Dendritic cell treated with granulocyte-macrophage colony-stimulating factor and Interleukin-4, amounts not matched to agents 40 ng/mL and 50 ng/mL, for 4 days (primary cell): ENCODE measurements at regions of chr1 and their contacts with region 1.

Region 1: DNA sequence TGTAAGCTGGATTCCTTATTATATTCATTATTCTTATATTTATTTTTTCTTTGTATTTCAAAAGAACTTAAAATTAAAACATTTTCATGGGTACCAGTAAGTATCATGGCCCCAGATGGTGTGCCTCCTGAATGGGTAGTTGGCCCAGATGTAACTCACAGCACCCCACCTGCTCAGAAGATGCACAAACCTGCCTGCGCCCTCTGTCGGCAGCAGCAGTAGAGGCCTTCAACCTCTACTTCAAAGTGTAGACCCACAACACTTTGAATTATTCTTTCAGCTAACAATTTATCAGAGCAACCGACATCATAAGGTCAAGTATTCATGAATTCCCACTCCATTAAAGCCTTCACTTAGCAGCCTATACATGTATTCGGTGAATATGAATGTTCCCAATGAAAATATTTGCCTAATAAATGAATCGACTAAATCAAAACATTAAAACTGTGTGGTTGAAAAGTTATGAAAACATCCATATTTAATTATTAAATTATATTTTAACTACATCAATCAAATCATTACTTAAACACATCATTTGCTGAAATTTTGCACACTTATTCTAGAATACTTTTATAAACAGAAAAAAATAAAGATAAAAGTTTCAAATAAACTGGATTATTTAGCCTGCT is 25.4 kb downstream of the PIGM start:
- H3K4me3 Mint-ChIP-seq: no peak overlapping the region
- H3K27ac Mint-ChIP-seq: no peak overlapping the region
- H3K4me1 Mint-ChIP-seq: peaks cover 7% of the 10 kb centered on the region
- H3K27me3 Mint-ChIP-seq: no peaks in the 10 kb centered on the region

Region 2: DNA sequence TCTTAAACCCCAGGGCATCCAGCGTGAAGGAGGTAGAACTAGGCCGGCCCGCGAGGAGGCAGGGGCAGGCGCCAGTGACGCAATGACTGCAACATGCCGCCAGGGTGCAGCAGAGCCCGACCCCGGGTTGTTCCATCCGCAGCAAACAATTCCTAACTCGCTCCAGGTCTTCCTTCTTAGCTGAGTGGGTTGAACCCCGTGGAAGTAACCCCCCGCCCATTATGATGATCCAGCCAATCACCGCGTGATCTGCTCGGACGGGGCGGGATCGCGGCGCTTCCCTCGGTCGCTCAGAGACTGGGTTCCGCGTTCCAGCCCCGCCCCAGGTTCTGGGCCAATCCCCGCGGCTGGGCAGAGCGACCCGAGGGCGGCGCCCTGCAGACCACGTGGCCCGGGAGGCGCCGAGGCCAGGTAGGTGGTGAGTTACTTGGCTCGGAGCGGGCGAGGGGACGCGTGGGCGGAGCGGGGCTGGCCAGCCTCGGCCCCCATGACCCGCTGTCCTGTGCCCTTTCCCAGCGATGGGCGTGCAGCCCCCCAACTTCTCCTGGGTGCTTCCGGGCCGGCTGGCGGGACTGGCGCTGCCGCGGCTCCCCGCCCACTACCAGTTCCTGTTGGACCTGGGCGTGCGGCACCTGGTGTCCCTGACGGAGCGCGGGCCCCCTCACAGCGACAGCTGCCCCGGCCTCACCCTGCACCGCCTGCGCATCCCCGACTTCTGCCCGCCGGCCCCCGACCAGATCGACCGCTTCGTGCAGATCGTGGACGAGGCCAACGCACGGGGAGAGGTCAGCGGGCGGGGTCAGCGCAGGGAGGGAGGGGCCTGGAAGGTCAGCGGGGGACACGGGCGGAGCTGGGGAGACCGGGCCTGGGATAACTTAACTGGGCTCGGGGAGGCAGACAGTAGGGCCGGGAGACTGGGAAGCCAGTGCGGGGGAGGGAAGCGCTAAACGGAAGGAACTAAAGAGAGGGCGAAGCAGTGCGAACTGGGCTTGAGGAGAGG is 225.5 kb before region 1 on chr1 and contains the start of gene DUSP23:
- intact Hi-C with region 1: loop called (anchors 5 kb)
- H3K4me3 Mint-ChIP-seq: peak within 1 kb of the TSS; percentile 80
- H3K27ac Mint-ChIP-seq: peak within 1 kb of the TSS; percentile 82
- H3K4me1 Mint-ChIP-seq: peaks cover 52% of the 10 kb centered on the region
- H3K27me3 Mint-ChIP-seq: no peaks in the 10 kb centered on the region

Region 3: GRCh38 chr1:159798893-159799292 is 207.5 kb before region 1 on chr1:
- intact Hi-C with region 1: loop called (anchors 2 kb)
- H3K4me3 Mint-ChIP-seq: no peak overlapping the region
- H3K27ac Mint-ChIP-seq: no peak overlapping the region
- H3K4me1 Mint-ChIP-seq: peaks cover 52% of the 10 kb centered on the region
- H3K27me3 Mint-ChIP-seq: peaks cover 13% of the 10 kb centered on the region

Region 4: GRCh38 chr1:159936273-159936904 is 70.0 kb before region 1 on chr1:
- intact Hi-C with region 1: loop called (anchors 1 kb)
- H3K4me3 Mint-ChIP-seq: no peak overlapping the region
- H3K27ac Mint-ChIP-seq: no peak overlapping the region
- H3K4me1 Mint-ChIP-seq: peaks cover 67% of the 10 kb centered on the region
- H3K27me3 Mint-ChIP-seq: peaks cover 14% of the 10 kb centered on the region